Stomach (tissue), 19 donors: ENCODE measurements at regions of chr14 and their contacts with region 1.

Region 1: GRCh38 chr14:80845856-80846255 is 95.7 kb downstream of the CEP128 start:
- DNase-seq: no peak
- H3K4me3 ChIP-seq: no peak overlapping the region
- H3K27ac ChIP-seq: no peak overlapping the region
- H3K4me1 ChIP-seq: peaks cover 0 to 3% (median 0%) of the 10 kb centered on the region in 4 donors
- H3K27me3 ChIP-seq: no peaks in the 10 kb centered on the region
- CTCF ChIP-seq: no peak
- EP300 ChIP-seq: no peak
- POLR2A ChIP-seq: no peak

Region 2: DNA sequence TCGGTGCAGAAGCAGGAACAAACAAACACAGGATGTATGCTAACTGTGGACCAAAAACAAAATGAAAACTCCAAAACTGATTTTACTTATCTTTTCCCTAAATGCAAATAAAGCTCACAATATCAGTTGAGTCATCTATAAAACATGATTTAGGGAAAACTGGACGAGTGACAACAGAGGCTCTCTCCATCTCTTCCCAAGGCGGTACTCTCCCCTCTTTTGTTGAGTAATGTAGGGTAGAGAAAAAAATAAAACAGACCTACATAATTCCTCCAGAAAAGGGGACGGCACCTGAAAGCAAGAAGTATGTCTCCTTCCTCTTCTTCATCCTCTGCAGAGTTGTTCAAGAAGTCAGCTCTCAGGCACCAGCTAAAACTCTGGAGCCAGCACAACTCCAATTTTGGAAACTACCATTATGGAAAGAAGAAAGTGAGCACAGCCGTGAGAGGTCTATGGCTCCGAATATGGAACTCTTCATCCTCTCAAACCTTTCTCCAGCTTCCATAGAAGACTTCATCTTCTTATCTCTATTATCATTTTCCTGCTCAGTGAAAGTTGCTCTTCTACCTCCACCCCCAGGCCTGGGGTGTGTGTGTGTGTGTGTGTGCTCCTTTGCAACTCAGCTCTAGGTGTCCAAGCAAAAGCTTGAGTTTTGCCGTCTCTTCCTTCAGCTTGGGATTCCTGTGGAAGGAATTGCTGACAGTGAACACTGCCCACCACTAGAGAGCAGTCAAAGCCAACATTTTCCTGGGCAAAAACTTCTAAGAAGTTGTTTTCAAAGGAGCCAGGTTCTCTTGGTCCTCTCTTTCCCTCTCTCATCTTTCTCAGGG is 790.0 kb before region 1 on chr14:
- intact Hi-C with region 1: loop called (anchors 5 kb)
- DNase-seq: peak; percentile 27 to 77
- H3K4me3 ChIP-seq: no peak overlapping the region
- H3K27ac ChIP-seq: no peak overlapping the region
- H3K4me1 ChIP-seq: peaks cover 0 to 6% (median 0%) of the 10 kb centered on the region in 4 donors
- H3K27me3 ChIP-seq: no peaks in the 10 kb centered on the region
- CTCF ChIP-seq: peak in 5 of 7 experiments; percentile 48 to 67 (median 67)
- EP300 ChIP-seq: no peak
- POLR2A ChIP-seq: no peak

Region 3: DNA sequence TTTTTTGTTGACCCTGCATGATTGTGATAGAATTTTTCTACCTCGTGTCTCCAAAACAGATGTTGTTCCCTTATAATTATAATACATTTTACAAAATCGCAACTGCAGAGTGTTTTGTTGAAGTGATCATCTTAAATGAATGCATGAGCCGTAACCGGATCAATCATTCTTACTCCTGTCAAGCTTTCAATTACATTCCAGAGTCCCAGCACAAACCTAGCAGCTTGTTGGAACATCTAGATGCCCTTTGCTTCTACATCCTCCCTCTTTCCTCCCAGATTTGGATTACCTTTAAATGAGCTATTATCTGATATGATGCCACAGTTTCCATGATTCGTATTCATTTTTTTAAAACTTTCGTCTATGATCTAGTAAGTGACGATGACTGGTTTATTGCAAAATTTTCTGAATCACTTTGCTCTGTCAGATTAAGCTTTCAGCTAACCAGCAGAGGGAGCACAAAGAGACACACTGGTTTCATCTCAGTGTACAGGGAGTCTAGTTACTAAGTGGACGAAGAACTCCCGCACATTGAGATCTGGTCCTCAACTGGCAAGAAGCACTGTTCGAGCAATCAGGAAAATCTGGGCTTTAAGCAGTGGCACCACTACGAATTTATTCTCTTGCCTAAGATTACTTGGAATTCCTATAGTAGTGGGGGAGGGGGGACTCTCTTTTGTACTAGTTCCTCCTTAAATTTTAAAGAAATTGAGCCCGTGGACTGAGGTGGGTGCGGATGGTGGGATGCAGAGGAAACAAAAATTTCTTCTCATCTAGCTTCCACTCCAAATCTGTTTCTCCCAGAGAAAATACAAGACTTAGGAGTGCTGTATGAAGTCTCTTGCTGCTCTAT is 150.4 kb after region 1 on chr14:
- intact Hi-C with region 1: no loop called
- DNase-seq: peak in 1 of 2 donors; percentile 76
- H3K4me3 ChIP-seq: no peak overlapping the region
- H3K27ac ChIP-seq: no peak overlapping the region
- H3K4me1 ChIP-seq: peaks cover 0 to 8% (median 0%) of the 10 kb centered on the region in 4 donors
- H3K27me3 ChIP-seq: peaks cover 0 to 19% (median 0%) of the 10 kb centered on the region in 3 donors
- CTCF ChIP-seq: peak in 5 of 7 experiments; percentile 20 to 66 (median 51)
- EP300 ChIP-seq: no peak
- POLR2A ChIP-seq: no peak